ENCODE measurements at regions of chr6 and their contacts with region 1.

Region 1: DNA sequence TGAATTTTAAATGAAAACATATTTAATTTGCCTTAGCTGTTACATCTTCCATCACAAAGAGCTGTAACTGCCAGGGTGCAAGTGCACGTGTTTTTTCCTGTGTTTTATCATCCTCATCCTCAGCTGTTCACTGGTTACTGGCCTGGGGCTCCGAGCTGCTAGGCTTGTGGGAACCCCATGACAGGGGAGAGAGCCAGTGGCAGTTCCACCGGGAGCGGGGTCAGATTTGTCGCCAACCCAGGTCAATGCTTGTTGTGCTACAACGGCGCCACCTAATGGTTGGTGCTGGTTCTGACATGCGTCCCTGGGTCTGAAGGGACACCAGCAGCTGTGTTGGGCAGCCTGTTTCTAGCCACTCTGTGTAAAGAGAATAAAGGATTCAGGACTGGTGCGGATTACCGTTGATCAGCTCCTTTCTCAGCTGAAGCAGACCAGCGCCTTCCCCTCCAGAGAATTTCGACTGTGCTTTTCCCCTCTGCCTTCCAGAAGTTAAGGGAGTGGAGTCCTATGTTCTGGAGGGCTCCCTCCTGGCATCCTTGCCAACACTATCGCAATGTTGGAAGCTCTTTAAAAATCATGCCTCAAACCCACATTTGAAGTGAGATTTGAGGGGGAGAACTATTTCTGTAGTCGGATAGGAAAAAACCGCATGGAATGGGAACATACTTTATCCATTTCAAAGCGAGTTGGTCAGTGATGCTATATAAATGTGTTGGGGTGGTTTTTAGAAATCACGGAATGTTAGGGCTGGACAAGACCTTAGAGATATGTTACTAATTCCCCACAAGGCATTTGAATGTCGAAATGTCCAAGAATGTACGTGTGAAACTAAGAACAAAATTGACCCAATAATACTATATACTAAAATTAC is 32.1 kb downstream of the SUMO4 start:
- DNase-seq: peak; percentile 89
- ATAC-seq: peak; percentile 93 to 94

Region 2: DNA sequence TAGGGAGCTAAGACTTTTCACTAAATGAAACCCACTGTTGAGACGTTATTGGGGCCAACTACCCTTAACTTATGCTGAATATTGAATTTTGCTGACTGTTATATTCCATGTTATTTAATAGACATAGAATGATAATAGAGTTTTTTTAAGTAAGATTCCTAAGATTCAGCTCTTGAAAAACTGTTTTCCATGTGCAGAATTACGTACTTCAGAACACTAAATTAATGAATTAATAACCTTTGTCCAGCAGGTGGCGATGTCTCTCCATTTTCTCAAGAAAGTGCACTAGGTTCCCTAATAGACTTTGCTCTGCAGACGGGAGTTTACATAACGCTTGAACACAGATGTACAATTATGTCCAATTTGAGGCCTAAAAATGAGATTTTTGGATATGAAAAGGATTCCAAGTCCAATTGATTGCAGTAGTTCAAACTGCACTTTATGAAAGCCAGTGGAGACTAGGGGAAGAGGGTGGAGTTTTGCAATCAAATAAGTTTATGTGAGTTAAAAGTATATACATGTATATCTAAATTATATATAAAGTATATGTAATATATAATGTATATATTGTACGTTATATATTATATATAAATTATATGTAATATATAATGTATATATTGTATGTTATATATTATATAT is 403.3 kb before region 1 on chr6:
- intact Hi-C with region 1: loop called (anchors 2 to 5 kb)
- DNase-seq: peak; percentile 56
- ATAC-seq: peak; percentile 44 to 69

Region 3: DNA sequence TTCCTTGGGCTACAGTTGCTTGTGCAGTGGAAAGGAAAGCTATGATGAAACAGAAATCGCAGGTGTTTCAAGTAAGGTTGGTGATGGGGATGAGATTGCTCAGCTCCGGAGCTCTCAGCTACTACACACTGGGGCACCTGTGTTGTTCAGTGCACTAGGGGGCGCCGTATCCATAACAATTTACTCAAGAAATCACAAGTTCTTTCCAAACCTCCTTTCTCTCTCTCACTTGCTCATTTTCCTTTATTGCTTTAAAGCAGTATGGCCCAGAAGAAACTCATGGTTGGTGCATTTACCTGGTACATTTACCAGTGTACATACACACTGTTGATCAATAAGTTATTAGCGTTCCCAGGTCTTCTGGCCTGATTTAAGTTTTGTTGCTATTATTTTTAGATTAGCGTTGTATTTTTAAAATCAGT is 349.8 kb before region 1 on chr6:
- intact Hi-C with region 1: loop called (anchors 1 to 5 kb)
- DNase-seq: peak; percentile 84
- ATAC-seq: peak; percentile 72 to 74

Region 4: DNA sequence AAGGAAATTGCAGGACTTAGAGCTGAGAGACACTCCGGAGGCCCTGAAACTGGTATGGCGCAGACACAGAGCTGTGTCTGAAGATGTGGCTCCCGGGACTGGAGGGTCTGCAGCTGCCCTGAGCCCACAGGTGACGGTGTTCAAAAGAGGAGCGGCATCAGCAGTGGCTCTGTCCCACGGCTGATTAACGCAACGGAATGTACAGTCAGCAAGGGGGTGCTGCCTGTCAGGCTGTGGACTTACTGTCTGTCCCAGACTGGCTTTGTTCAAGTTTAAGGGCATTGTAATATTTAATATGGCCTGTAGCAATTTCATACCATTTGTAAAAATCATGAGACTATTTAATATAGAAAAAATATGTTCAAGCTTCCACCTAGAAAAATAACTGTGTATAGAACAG is 342.6 kb before region 1 on chr6:
- intact Hi-C with region 1: loop called in 1 of 2 experiments (anchors 5 kb)
- DNase-seq: no peak
- ATAC-seq: peak in 1 of 2 donors; percentile 47

Region 5: DNA sequence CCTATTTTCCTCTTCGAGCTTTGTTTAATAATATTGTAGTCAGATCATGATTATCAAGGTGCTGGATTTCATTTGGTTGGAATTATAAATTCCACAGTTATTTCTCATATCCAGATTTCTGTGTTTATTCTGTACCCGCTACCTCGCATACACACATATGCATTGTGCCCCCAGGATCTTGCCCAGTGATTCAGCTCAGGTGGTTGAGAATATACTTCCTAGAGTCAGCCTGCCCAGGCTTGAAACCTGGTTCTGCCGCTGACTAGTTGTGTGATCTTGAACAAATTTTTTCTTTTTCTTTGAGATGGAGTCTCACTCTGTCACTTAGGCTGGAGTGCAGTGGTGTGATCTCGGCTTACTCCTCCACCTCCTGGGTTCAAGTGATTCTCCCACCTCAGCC is 148.7 kb after region 1 on chr6:
- intact Hi-C with region 1: no loop called
- DNase-seq: no peak
- ATAC-seq: no peak